ENCODE measurements at regions of chr15 and their contacts with region 1.

Region 1: GRCh38 chr15:33086507-33087121 is 107.9 kb downstream of the FMN1 start:
- DNase-seq: no peak
- ATAC-seq: peak in 5 of 8 donors; percentile 49 to 64 (median 58)
- H3K4me3 ChIP-seq: no peak overlapping the region
- H3K27ac ChIP-seq: no peak overlapping the region
- H3K4me1 ChIP-seq: peaks cover 0 to 12% (median 0%) of the 10 kb centered on the region in 9 donors
- H3K27me3 ChIP-seq: no peaks in the 10 kb centered on the region
- CTCF ChIP-seq: peak; percentile 7 to 73 (median 63)

Region 2: GRCh38 chr15:33031324-33031821 is 55.2 kb before region 1 on chr15:
- intact Hi-C with region 1: no loop called
- DNase-seq: no peak
- ATAC-seq: peak in 2 of 8 donors; percentile 16 to 24
- H3K4me3 ChIP-seq: no peak overlapping the region
- H3K27ac ChIP-seq: no peak overlapping the region
- H3K4me1 ChIP-seq: peaks cover 0 to 28% (median 12%) of the 10 kb centered on the region in 9 donors
- H3K27me3 ChIP-seq: no peaks in the 10 kb centered on the region
- CTCF ChIP-seq: no peak

Region 3: DNA sequence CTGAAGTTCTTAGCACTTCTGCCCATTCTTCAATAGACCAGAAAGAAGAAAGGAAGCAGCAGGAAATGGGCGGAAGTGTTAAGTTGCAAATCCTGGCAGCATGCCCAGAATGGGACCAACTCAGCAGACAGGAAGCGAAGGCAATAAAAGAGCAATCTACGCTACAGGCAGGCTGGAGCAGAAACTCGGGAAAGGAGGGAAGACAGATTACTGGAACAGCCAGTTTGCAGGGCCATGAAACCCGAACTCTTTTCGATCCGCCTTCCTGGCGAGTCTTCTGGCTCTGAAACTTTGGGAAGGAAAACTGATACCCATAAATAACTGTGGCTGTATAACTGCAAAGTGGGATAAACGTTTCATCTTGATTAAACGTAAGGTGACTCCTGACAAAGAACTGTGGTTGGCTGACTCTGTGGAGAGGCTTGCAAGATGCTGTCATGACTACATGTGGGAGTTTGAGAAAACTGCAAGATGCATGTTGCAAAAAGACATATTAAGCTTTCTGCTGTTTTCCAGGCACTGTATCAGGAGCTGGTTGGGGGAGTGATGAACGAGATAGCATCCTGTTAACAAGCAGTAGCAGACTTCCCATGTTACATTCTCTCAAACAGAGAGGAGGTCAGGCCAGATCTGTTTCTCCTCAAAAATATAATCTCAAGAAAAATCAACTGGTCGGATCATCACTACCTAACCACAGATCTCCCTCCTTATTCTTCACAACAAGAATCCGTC is 40.1 kb after region 1 on chr15:
- intact Hi-C with region 1: loop called in 4 of 10 experiments (anchors 5 kb)
- DNase-seq: peak; percentile 29 to 67
- ATAC-seq: peak in 6 of 8 donors; percentile 53 to 82 (median 64)
- H3K4me3 ChIP-seq: no peak overlapping the region
- H3K27ac ChIP-seq: peak overlapping the region in 1 of 10 donors; percentile 52
- H3K4me1 ChIP-seq: peaks cover 0 to 22% (median 3%) of the 10 kb centered on the region in 9 donors
- H3K27me3 ChIP-seq: no peaks in the 10 kb centered on the region
- CTCF ChIP-seq: no peak

Region 4: DNA sequence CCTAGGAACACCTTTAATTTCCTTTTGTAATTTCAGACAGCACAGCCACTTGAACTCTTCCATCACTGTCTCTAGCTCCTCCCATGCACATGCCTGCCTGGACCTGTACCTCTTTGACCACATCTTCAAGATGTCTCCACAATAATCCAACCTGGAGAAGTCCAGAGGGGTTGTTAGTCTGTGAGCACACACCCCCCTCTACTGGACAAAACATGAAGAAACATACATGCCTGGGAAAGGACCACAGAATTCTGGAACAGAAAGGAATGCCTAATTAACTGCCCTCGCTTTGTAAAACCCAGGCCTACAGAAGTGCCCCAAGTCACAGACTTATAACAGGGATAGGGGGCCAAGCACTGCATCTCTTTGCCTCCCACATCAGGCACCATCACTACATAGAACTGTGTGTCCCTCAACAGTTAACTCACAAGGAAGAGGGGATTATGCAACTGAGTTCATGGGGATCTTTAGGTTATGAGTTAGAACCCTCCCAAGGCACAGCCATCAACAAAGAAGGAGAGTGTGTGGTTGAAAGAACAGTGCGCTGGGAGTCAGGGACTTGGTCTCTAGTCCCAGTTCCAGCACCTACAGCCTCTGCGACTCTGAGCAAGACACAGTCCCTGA is 46.2 kb after region 1 on chr15:
- intact Hi-C with region 1: loop called in 9 of 10 experiments (anchors 1 to 5 kb)
- DNase-seq: no peak
- ATAC-seq: peak; percentile 53 to 83 (median 64)
- H3K4me3 ChIP-seq: no peak overlapping the region
- H3K27ac ChIP-seq: no peak overlapping the region
- H3K4me1 ChIP-seq: peaks cover 0 to 46% (median 17%) of the 10 kb centered on the region in 9 donors
- H3K27me3 ChIP-seq: no peaks in the 10 kb centered on the region
- CTCF ChIP-seq: peak; percentile 27 to 72 (median 63)

Region 5: GRCh38 chr15:33179874-33180273 is 93.3 kb after region 1 on chr15:
- intact Hi-C with region 1: no loop called
- DNase-seq: no peak
- ATAC-seq: no peak
- H3K4me3 ChIP-seq: no peak overlapping the region
- H3K27ac ChIP-seq: no peak overlapping the region
- H3K4me1 ChIP-seq: no peaks in the 10 kb centered on the region
- H3K27me3 ChIP-seq: no peaks in the 10 kb centered on the region
- CTCF ChIP-seq: no peak

Region 6: DNA sequence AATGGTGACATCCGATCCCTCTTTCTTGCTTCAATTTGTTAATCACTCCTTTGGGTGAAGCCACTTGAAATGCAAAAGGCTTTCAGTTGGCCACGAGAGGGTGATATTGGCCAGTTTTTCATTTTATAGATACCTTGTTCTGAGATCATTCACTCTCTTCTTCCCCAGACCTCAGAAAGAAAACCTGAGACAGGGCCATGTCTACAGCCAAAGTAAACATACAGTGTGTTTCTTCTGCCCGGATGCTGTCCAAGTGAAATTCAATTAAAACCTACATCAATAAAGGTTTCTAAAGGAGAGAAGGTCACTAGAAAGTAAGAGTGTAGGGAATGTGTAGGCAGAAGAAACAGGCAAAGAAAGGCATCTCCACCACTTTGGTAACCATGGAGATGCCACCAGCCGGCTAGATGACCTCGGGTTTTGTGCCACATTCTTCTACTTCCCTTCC is 147.4 kb after region 1 on chr15:
- intact Hi-C with region 1: no loop called
- DNase-seq: no peak
- ATAC-seq: peak in 1 of 8 donors; percentile 16
- H3K4me3 ChIP-seq: no peak overlapping the region
- H3K27ac ChIP-seq: no peak overlapping the region
- H3K4me1 ChIP-seq: no peaks in the 10 kb centered on the region
- H3K27me3 ChIP-seq: peaks cover 0 to 35% (median 19%) of the 10 kb centered on the region in 7 donors
- CTCF ChIP-seq: peak in 7 of 9 donors; percentile 16 to 52 (median 40)

Measured in heart right ventricle (tissue), 16 donors.